ENCODE measurements at regions of chr20 and their contacts with region 1.

Region 1: DNA sequence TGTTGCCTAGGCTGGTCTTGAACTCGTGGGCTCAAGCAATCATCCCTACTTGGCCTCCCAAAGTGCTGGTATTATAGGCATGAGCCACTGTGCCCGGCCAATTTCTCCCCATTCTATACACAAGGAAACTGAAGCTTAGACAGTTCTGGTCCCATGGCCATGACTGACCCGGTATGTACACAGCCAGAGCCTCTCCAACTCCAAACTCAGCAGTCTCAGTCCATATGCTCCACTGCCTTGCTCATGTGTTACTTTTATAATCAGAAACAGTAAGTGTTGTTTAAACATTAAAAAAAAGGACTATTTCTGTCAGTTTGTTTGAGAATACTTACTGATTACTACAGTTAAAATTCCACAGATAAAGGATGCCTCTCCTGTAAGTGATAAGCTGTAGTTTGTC is 50.6 kb downstream of the RNF24 start:
- DNase-seq: no peak
- ATAC-seq: peak; percentile 62
- H3K4me3 ChIP-seq: no peak overlapping the region
- H3K27ac ChIP-seq: peak overlapping the region; percentile 57; the same call in 1 of the 2 replicates
- H3K4me1 ChIP-seq: peaks cover 4% of the 10 kb centered on the region
- H3K27me3 ChIP-seq: no peaks in the 10 kb centered on the region
- CTCF ChIP-seq: no peak
- POLR2A ChIP-seq: no peak
- RAD21 ChIP-seq: no peak

Region 2: DNA sequence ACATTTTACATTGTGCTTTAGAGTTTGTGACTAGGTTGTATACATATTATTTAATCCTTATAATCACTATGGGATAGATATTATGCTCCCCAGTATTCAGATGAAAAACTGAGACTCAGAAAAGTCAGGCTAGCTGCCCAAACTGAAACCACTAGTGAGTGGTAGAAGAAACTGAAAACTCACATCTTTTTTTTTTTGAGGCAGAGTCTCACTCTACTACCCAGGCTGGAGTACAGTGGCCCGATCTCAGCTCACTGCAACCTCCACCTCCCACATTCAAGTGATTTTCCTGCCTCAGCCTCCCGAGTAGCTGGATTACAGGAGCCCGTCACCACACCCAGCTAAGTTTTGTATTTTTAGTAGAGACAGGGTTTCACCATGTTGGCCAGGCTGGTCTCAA is 28.4 kb after region 1 on chr20:
- CTCF ChIA-PET with region 1: interaction called, 3 read pairs
- POLR2A ChIA-PET with region 1: interaction called, 4 read pairs
- dilution Hi-C with region 1: no loop called
- in situ Hi-C with region 1: no loop called
- intact Hi-C with region 1: loop called (anchors 5 kb)
- DNase-seq: no peak
- ATAC-seq: no peak
- H3K4me3 ChIP-seq: no peak overlapping the region
- H3K27ac ChIP-seq: no peak overlapping the region
- H3K4me1 ChIP-seq: peaks cover 8% of the 10 kb centered on the region
- H3K27me3 ChIP-seq: no peaks in the 10 kb centered on the region
- CTCF ChIP-seq: no peak
- POLR2A ChIP-seq: no peak
- RAD21 ChIP-seq: no peak